ENCODE measurements at regions of chr10 and their contacts with region 1.

Region 1: GRCh38 chr10:8331883-8332729 is 277.6 kb downstream of the GATA3 start:
- DNase-seq: peak; percentile 80 to 96 (median 90)
- ATAC-seq: peak; percentile 90 to 91
- H3K4me3 Mint-ChIP-seq: peak overlapping the region; percentile 76 to 92 (median 86)
- H3K27ac Mint-ChIP-seq: peak overlapping the region; percentile 93 to 99 (median 97)
- H3K4me1 Mint-ChIP-seq: peaks cover 17 to 34% (median 30%) of the 10 kb centered on the region in 4 donors
- H3K27me3 Mint-ChIP-seq: peaks cover 0 to 2% (median 0%) of the 10 kb centered on the region in 5 donors

Region 2: GRCh38 chr10:8059959-8060703 is 272.0 kb before region 1 on chr10:
- POLR2A ChIA-PET with region 1: interaction called, 11 read pairs
- DNase-seq: peak in 7 of 10 donors; percentile 42 to 71 (median 54)
- ATAC-seq: peak; percentile 33 to 46
- H3K4me3 Mint-ChIP-seq: peak overlapping the region; percentile 81 to 100 (median 92)
- H3K27ac Mint-ChIP-seq: peak overlapping the region; percentile 93 to 99 (median 98)
- H3K4me1 Mint-ChIP-seq: peaks cover 43 to 86% (median 80%) of the 10 kb centered on the region in 4 donors
- H3K27me3 Mint-ChIP-seq: peaks cover 0 to 2% (median 0%) of the 10 kb centered on the region in 5 donors

Region 3: DNA sequence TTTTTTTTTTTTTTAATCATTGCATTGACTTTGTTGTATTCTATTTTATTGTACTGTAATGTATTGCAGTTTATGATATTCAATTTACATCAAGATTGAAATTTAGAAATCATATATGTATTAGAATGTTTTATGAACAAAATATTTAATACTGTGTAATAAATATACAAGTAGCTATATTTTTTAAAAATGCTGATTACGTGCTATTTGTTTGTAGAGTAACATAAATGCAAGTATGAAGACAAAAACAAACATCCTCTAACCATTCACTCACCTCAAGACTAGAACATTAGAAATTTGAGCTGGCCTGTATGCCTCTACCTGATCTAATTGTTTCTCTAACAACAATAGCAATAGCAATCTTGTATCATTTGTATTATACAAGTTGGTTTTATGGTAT is 12.7 kb after region 1 on chr10:
- POLR2A ChIA-PET with region 1: no interaction called
- DNase-seq: no peak
- ATAC-seq: no peak
- H3K4me3 Mint-ChIP-seq: no peak overlapping the region
- H3K27ac Mint-ChIP-seq: no peak overlapping the region
- H3K4me1 Mint-ChIP-seq: peaks cover 0 to 2% (median 0%) of the 10 kb centered on the region in 4 donors
- H3K27me3 Mint-ChIP-seq: no peaks in the 10 kb centered on the region

Region 4: GRCh38 chr10:8403711-8404371 is 71.7 kb after region 1 on chr10:
- POLR2A ChIA-PET with region 1: interaction called, 14 read pairs
- DNase-seq: no peak
- ATAC-seq: no peak
- H3K4me3 Mint-ChIP-seq: peak overlapping the region; percentile 52 to 86 (median 78)
- H3K27ac Mint-ChIP-seq: peak overlapping the region; percentile 86 to 97 (median 94)
- H3K4me1 Mint-ChIP-seq: peaks cover 49 to 76% (median 72%) of the 10 kb centered on the region in 4 donors
- H3K27me3 Mint-ChIP-seq: no peaks in the 10 kb centered on the region

Region 5: GRCh38 chr10:8871366-8871765 is 539.3 kb after region 1 on chr10:
- POLR2A ChIA-PET with region 1: no interaction called
- DNase-seq: no peak
- ATAC-seq: no peak
- H3K4me3 Mint-ChIP-seq: no peak overlapping the region
- H3K27ac Mint-ChIP-seq: no peak overlapping the region
- H3K4me1 Mint-ChIP-seq: no peaks in the 10 kb centered on the region
- H3K27me3 Mint-ChIP-seq: peaks cover 0 to 3% (median 0%) of the 10 kb centered on the region in 5 donors